ENCODE measurements at regions of chr7 and their contacts with region 1.

Region 1: DNA sequence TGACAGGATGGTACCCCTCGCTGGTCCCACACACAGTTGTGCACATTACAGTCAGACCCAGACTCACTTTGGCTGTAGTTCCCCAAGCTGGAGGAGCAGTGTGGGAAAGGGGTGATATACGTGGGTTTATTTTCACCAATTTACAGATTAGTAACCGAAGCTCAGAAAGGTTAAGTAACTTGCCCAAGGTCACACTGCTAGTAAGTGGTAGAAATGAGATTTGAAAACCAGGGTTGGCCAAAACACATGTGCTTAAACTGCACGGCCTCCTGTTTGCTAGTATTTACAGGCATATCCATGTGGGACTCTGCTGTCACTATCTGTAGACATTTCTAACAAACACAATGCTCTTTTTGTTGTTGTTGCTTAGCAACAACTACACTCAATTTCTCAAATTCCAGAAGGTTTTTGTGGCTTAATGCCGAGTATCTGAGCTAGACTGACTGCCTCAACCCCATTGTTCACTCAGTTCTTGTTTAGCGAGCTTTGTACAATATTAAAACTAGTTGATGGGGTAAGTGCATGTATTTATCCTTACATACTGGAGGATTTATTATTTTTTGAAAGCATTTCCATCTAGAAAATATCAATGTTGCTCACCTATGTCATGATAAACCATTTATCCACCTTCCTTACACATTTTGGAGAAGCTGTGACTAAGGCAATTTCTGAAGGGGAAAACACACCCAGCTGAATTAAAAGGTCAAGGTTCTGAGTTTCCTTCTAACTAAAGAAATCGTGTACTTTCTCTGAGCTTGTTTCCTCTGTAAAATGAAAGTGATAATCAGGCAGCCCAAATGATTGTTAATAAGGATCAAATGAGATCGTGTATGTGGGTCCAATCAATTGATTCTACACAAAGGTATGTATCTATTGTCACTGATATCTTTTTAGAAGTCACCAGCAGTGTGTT is 5.3 kb upstream of the TMEM139 start:
- DNase-seq: peak in 2 of 35 experiments; percentile 3 to 59
- ATAC-seq: peak; percentile 51 to 88 (median 60)
- H3K4me3 ChIP-seq: peak overlapping the region in 1 of 2 donors; percentile 25
- H3K4me3 Mint-ChIP-seq: peak overlapping the region; percentile 32 to 74 (median 68)
- H3K27ac ChIP-seq: peak overlapping the region; percentile 78
- H3K27ac Mint-ChIP-seq: peak overlapping the region; percentile 82 to 94
- H3K4me1 ChIP-seq: peaks cover 18 to 22% of the 10 kb centered on the region in 2 experiments
- H3K4me1 Mint-ChIP-seq: peaks cover 37 to 41% (median 39%) of the 10 kb centered on the region in 3 donors
- H3K27me3 ChIP-seq: no peaks in the 10 kb centered on the region
- H3K27me3 Mint-ChIP-seq: no peaks in the 10 kb centered on the region

Region 2: GRCh38 chr7:143054621-143055020 is 224.8 kb before region 1 on chr7:
- CTCF ChIA-PET with region 1: no interaction called
- POLR2A ChIA-PET with region 1: no interaction called
- DNase-seq: no peak
- ATAC-seq: no peak
- H3K4me3 ChIP-seq: no peak overlapping the region
- H3K4me3 Mint-ChIP-seq: no peak overlapping the region
- H3K27ac ChIP-seq: no peak overlapping the region
- H3K27ac Mint-ChIP-seq: no peak overlapping the region
- H3K4me1 ChIP-seq: no peaks in the 10 kb centered on the region
- H3K4me1 Mint-ChIP-seq: no peaks in the 10 kb centered on the region
- H3K27me3 ChIP-seq: peaks cover 0 to 14% of the 10 kb centered on the region in 2 experiments
- H3K27me3 Mint-ChIP-seq: peaks cover 14 to 20% of the 10 kb centered on the region in 2 donors

Region 3: DNA sequence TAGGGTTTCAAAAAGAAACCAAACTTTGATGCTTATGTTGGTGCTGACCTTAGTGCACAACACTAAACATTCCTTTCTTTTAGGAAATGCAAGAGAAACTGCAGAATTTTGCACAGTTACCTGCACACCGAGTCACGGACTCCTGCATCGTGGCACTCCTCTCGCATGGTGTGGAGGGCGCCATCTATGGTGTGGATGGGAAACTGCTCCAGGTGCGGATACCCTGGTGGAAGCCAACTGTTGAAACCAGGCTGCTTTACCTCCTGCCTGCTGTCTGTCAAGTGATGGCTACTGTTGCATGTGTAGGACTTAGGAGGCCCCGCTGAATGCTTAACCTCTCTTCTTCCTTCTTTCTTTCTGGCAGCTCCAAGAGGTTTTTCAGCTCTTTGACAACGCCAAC is 20.4 kb after region 1 on chr7:
- CTCF ChIA-PET with region 1: interaction called, 7 to 10 read pairs
- POLR2A ChIA-PET with region 1: no interaction called
- DNase-seq: peak; percentile 29 to 78 (median 62)
- ATAC-seq: peak; percentile 94 to 99 (median 98)
- H3K4me3 ChIP-seq: no peak overlapping the region
- H3K4me3 Mint-ChIP-seq: no peak overlapping the region
- H3K27ac ChIP-seq: no peak overlapping the region
- H3K27ac Mint-ChIP-seq: peak overlapping the region; percentile 77 to 79
- H3K4me1 ChIP-seq: peaks cover 10% of the 10 kb centered on the region in 2 experiments
- H3K4me1 Mint-ChIP-seq: peaks cover 42 to 45% (median 45%) of the 10 kb centered on the region in 3 donors
- H3K27me3 ChIP-seq: no peaks in the 10 kb centered on the region
- H3K27me3 Mint-ChIP-seq: no peaks in the 10 kb centered on the region

Measured in T-cell (primary cell).